ENCODE measurements at regions of chr3 and their contacts with region 1.

Region 1: GRCh38 chr3:124905849-124906248 is 18.7 kb upstream of the ITGB5 start:
- DNase-seq: no peak
- H3K4me3 ChIP-seq: no peak overlapping the region
- H3K27ac ChIP-seq: no peak overlapping the region
- H3K4me1 ChIP-seq: no peaks in the 10 kb centered on the region; a peak in 1 of 7 replicates
- H3K27me3 ChIP-seq: no peaks in the 10 kb centered on the region
- CTCF ChIP-seq: no peak
- EP300 ChIP-seq: no peak
- POLR2A ChIP-seq: no peak
- RAD21 ChIP-seq: no peak

Region 2: DNA sequence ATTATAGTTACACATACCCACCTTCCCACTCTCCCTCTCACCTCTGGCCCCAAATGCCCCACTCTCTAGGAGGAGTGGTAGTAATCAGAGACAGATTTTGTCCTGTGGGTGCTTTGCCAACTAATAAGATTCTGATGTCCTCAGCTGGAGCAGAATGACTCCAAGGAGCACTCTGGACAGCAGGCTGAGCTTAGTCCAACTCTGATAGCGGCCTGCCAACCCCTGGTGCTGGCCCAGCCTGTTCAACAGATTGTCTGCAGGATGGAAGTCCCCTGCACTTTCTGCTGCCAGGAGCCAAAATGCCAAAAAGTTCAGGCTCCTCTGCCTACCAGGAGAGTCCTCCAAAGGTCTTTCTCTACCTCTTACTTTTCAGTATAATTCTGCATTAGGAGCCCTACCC is 336.1 kb before region 1 on chr3:
- CTCF ChIA-PET with region 1: interaction called, 11 read pairs
- POLR2A ChIA-PET with region 1: no interaction called
- DNase-seq: no peak
- H3K4me3 ChIP-seq: no peak overlapping the region
- H3K27ac ChIP-seq: no peak overlapping the region
- H3K4me1 ChIP-seq: no peaks in the 10 kb centered on the region; a peak in 1 of 7 replicates
- H3K27me3 ChIP-seq: peaks cover 0 to 2% (median 0%) of the 10 kb centered on the region in 4 experiments; a peak in 2 of 7 replicates
- CTCF ChIP-seq: no peak
- EP300 ChIP-seq: no peak
- POLR2A ChIP-seq: no peak
- RAD21 ChIP-seq: no peak

Region 3: DNA sequence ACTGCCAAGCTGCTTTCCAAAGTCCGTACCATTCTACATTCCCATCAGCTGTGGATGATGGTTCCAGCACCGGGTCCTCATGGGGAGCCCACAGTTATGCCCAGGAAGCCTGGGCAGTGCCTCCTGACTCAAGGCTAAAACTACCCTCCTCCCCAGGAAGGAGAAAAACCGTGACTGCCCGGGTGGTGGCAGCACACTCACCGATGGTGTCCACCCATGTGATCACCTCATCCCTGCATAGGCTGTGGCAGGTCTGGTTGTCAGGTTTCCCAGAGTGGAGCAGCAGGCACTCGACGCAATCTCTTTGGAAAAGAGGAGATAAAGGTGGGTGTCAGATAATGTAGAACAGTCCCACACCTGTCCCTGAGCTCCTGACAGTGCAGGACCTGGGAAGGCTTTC is 137.0 kb before region 1 on chr3:
- CTCF ChIA-PET with region 1: interaction called, 173 read pairs
- POLR2A ChIA-PET with region 1: interaction called, 3 read pairs
- DNase-seq: no peak
- H3K4me3 ChIP-seq: no peak overlapping the region
- H3K27ac ChIP-seq: no peak overlapping the region
- H3K4me1 ChIP-seq: peaks cover 0 to 3% (median 2%) of the 10 kb centered on the region in 4 experiments; a peak in 4 of 7 replicates
- H3K27me3 ChIP-seq: no peaks in the 10 kb centered on the region; a peak in 1 of 7 replicates
- CTCF ChIP-seq: peak; percentile 32 to 48 (median 45)
- EP300 ChIP-seq: no peak
- POLR2A ChIP-seq: no peak
- RAD21 ChIP-seq: peak; percentile 27 to 43; a peak in 3 of 4 replicates

Region 4: DNA sequence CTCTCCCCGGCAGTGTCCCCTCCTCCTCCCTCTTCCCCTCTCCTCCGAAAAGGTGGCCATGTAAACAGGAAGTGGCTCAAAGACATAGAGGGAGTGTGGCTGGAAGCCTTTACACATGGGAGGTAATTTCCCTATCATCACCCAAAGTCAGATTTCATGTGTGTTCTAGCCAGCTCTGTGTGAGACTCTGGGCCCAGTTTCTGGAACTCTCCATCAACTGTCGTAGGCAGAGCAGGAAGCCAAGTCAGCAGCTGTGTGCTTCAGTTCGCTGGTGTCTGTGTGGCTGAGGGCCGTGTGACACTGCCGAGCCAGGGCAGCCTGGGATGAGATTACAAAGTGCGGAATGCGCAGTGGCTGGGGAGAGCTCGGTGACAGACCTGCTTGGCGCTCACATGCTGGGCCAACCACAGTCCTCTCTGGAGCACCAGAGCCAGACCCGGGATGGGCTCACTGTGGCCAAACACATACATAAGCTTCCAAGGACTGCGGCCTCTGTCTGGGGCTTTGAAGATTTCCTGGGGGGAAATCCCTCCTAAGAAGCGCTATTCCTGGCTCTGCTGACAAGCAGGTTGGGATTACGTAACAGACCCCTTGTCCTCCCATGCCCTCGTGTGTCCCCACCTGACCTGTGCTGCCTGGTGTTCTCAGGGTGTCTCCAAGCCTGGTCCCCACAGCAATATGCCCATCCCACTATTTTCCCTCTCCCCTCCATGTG is 124.9 kb before region 1 on chr3:
- CTCF ChIA-PET with region 1: interaction called, 30 read pairs
- POLR2A ChIA-PET with region 1: no interaction called
- DNase-seq: no peak
- H3K4me3 ChIP-seq: no peak overlapping the region
- H3K27ac ChIP-seq: no peak overlapping the region
- H3K4me1 ChIP-seq: peaks cover 0 to 12% (median 6%) of the 10 kb centered on the region in 4 experiments; a peak in 6 of 7 replicates
- H3K27me3 ChIP-seq: no peaks in the 10 kb centered on the region
- CTCF ChIP-seq: no peak
- EP300 ChIP-seq: no peak
- POLR2A ChIP-seq: no peak
- RAD21 ChIP-seq: no peak

Region 5: GRCh38 chr3:124862006-124862405 is 43.8 kb before region 1 on chr3:
- CTCF ChIA-PET with region 1: interaction called, 11 read pairs
- POLR2A ChIA-PET with region 1: no interaction called
- DNase-seq: no peak
- H3K4me3 ChIP-seq: no peak overlapping the region
- H3K27ac ChIP-seq: no peak overlapping the region
- H3K4me1 ChIP-seq: peaks cover 0 to 8% (median 3%) of the 10 kb centered on the region in 4 experiments; a peak in 3 of 7 replicates
- H3K27me3 ChIP-seq: no peaks in the 10 kb centered on the region
- CTCF ChIP-seq: no peak
- EP300 ChIP-seq: no peak
- POLR2A ChIP-seq: no peak
- RAD21 ChIP-seq: no peak

Region 6: DNA sequence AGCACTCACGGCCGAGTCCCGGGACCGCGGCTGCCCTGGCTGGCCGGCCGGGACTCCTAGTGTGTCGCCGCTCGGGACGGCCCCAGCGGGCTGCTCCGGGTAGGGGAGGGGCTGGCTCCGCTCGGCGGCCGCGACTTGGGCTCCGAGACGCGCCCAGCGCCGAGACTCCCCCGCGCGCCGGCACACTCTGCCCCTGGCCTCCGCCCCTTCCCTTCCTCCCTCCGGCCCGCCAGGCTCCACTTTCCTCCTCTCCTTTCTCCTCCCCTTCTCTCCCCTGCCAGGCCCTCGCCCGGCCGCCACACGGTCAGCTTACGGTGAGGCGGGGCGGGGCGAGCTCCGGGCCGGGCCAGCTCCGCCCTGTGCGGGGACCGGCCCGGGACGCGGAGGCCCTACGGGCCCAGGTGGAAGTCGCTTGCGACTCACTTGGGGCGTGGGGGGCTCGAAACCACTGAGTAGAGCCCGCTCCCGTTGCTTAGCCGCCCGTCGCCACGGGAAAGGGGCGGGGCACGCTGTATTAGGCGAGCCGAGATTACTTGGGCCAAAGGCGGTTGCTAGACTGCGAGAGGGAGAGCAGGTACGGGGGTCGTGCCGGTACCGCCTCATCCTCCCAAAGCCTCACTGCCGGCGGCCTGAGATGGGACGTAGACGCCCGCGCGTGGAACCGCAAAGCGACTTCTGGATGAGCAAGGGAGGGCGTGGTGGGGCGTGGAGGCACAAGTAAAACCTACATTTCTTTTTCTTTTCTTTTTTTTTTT is 18.5 kb before region 1 on chr3 and contains the start of gene ITGB5:
- CTCF ChIA-PET with region 1: interaction called, 23 read pairs
- POLR2A ChIA-PET with region 1: interaction called, 15 read pairs
- DNase-seq: peak in 1 of 2 experiments; percentile 87
- H3K4me3 ChIP-seq: peak within 1 kb of the TSS; percentile 54 to 88 (median 68)
- H3K27ac ChIP-seq: peak within 1 kb of the TSS; percentile 52; the same call in 1 of the 2 replicates
- H3K4me1 ChIP-seq: peaks cover 7 to 40% (median 30%) of the 10 kb centered on the region in 4 experiments
- H3K27me3 ChIP-seq: no peaks in the 10 kb centered on the region
- CTCF ChIP-seq: no peak
- EP300 ChIP-seq: no peak
- POLR2A ChIP-seq: peak in 1 of 2 experiments; percentile 70; a peak in 2 of 3 replicates
- RAD21 ChIP-seq: 0 out of 4 replicates have a peak, but pooled peaks of 1 of the 2 experiments have one; percentile 0
- total RNA-seq, gene ITGB5: 251 and 268 TPM in 2 replicates

Region 7: DNA sequence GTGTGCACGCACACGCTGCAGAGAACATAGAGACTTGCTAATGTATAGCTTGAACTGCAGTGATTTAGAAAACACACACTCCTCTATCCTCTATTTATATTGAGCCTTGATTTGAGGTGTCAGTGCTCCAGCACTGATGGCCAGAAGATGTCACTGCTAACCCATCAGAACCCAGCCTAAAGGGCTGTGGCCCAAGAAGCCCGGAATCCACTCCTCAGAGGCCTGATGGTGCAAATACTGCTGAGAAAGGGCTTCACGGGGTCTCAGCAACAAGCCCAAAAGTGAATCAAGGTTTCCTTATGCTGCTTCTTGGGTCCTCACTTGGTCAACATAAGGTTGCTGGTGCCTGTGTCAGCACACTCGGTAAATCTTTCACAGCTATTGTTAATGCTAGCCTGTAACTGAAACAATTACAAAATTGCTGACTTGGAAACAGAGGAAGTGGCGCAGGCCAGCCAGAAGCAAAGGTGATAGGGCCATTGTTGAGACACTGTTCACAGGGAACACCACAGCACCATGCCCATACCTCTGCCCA is 89.7 kb after region 1 on chr3:
- CTCF ChIA-PET with region 1: no interaction called
- POLR2A ChIA-PET with region 1: no interaction called
- DNase-seq: peak; percentile 29 to 69
- H3K4me3 ChIP-seq: no peak overlapping the region
- H3K27ac ChIP-seq: no peak overlapping the region
- H3K4me1 ChIP-seq: peaks cover 8 to 20% (median 12%) of the 10 kb centered on the region in 4 experiments
- H3K27me3 ChIP-seq: no peaks in the 10 kb centered on the region
- CTCF ChIP-seq: peak; percentile 68 to 94 (median 90)
- EP300 ChIP-seq: no peak
- POLR2A ChIP-seq: no peak
- RAD21 ChIP-seq: peak; percentile 98 to 99